ENCODE measurements at regions of chr9 and their contacts with region 1.

Region 1: GRCh38 chr9:6353851-6354686 is 25.9 kb downstream of the TPD52L3 start:
- DNase-seq: no peak
- ATAC-seq: peak; percentile 80

Region 2: GRCh38 chr9:6566409-6567139 is 212.5 kb after region 1 on chr9:
- intact Hi-C with region 1: loop called (anchors 5 to 10 kb)
- DNase-seq: no peak
- ATAC-seq: no peak